Calu3 (cell line): ENCODE measurements at regions of chr5 and their contacts with region 1.

Region 1: DNA sequence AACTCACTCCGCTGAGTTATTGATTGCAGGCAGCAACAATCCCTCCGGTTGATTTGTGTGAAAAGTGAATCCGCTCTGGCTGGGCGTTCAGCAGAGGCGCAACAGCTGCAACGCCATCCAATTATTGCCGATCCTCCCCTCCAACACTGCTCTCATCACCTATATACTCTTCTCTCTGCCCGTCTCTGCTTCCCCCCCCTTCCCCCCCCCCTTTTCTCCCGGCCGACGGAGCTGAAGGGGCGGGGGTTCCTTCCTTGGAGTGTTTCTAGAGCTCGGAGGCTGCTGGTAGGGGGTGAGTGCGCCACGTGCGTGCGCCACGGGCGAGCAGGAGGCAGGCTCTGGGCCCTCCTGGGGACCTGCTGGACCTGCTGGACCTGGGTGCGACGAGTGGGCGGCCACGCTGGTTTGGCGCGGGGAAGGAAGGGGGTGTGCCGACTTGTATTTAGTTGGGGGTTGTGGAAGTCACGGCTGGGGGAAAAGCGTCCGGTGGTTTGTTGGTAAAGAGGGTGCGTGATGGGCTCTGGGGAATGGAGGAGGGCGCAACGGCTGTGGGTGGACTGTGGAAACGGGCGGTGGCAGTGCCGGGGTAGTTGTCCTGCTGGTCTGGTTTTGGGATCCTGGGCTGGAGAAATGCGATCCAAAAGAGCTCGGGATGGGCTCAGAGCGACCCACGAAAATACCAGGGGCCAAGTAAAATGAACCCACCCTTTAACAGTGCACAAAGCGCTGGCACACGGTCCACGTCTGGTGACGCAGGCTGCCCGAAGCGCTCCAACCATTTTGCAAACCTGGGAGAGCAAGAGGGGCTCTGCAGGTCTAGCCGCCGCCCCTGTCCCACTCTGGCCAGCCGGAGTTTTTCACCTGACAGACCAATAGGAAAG is 6.4 kb upstream of the MEF2C start:
- DNase-seq: peak; percentile 46
- H3K4me3 Mint-ChIP-seq: peak overlapping the region; percentile 99
- H3K27ac Mint-ChIP-seq: peak overlapping the region; percentile 65
- H3K4me1 Mint-ChIP-seq: peaks cover 14% of the 10 kb centered on the region
- H3K27me3 Mint-ChIP-seq: no peaks in the 10 kb centered on the region
- CTCF ChIP-seq: no peak

Region 2: GRCh38 chr5:88281322-88281721 is 608.1 kb before region 1 on chr5:
- CTCF ChIA-PET with region 1: no interaction called
- intact Hi-C with region 1: no loop called
- DNase-seq: no peak
- H3K4me3 Mint-ChIP-seq: no peak overlapping the region
- H3K27ac Mint-ChIP-seq: no peak overlapping the region
- H3K4me1 Mint-ChIP-seq: no peaks in the 10 kb centered on the region
- H3K27me3 Mint-ChIP-seq: no peaks in the 10 kb centered on the region
- CTCF ChIP-seq: no peak

Region 3: GRCh38 chr5:88452820-88453219 is 436.6 kb before region 1 on chr5:
- CTCF ChIA-PET with region 1: no interaction called
- intact Hi-C with region 1: no loop called
- DNase-seq: peak; percentile 17
- H3K4me3 Mint-ChIP-seq: no peak overlapping the region
- H3K27ac Mint-ChIP-seq: no peak overlapping the region
- H3K4me1 Mint-ChIP-seq: no peaks in the 10 kb centered on the region
- H3K27me3 Mint-ChIP-seq: no peaks in the 10 kb centered on the region
- CTCF ChIP-seq: no peak

Region 4: GRCh38 chr5:88813805-88814575 is 75.4 kb before region 1 on chr5:
- CTCF ChIA-PET with region 1: no interaction called
- intact Hi-C with region 1: no loop called
- DNase-seq: no peak
- H3K4me3 Mint-ChIP-seq: no peak overlapping the region
- H3K27ac Mint-ChIP-seq: no peak overlapping the region
- H3K4me1 Mint-ChIP-seq: no peaks in the 10 kb centered on the region
- H3K27me3 Mint-ChIP-seq: no peaks in the 10 kb centered on the region
- CTCF ChIP-seq: no peak

Region 5: GRCh38 chr5:89071101-89071940 is 181.9 kb after region 1 on chr5:
- CTCF ChIA-PET with region 1: interaction called, 17 read pairs
- intact Hi-C with region 1: no loop called
- DNase-seq: no peak
- H3K4me3 Mint-ChIP-seq: peak overlapping the region; percentile 46
- H3K27ac Mint-ChIP-seq: peak overlapping the region; percentile 84
- H3K4me1 Mint-ChIP-seq: peaks cover 25% of the 10 kb centered on the region
- H3K27me3 Mint-ChIP-seq: no peaks in the 10 kb centered on the region
- CTCF ChIP-seq: no peak

Region 6: DNA sequence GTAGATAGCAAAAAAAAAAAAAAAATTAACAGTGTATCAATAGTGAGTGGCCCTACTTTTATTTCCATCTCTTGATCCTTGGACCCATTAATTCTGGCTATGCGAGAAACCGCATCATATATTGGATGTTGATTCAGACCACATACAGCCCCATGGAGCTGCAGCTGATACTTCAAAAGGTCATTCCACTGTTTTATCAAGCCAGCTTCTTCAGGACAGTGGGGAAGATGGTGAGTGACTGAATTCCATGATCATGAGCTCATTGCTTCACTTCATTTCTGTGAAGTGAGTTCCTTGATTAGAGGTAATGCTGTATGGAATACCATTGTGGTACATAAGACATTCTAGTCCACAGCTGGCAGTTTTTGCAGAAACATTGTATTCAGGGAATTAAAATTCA is 216.4 kb after region 1 on chr5:
- CTCF ChIA-PET with region 1: interaction called, 15 read pairs
- intact Hi-C with region 1: no loop called
- DNase-seq: no peak
- H3K4me3 Mint-ChIP-seq: no peak overlapping the region
- H3K27ac Mint-ChIP-seq: no peak overlapping the region
- H3K4me1 Mint-ChIP-seq: no peaks in the 10 kb centered on the region
- H3K27me3 Mint-ChIP-seq: no peaks in the 10 kb centered on the region
- CTCF ChIP-seq: no peak